GM10248 (cell line): ENCODE measurements at regions of chr3 and their contacts with region 1.

Region 1: GRCh38 chr3:71875461-71875947 is 90.6 kb upstream of the PROK2 start:
- DNase-seq: peak; percentile 75
- CTCF ChIP-seq: peak; percentile 93

Region 2: GRCh38 chr3:71803248-71803647 is 72.3 kb before region 1 on chr3:
- CTCF ChIA-PET with region 1: no interaction called
- POLR2A ChIA-PET with region 1: no interaction called
- DNase-seq: no peak
- CTCF ChIP-seq: no peak

Region 3: DNA sequence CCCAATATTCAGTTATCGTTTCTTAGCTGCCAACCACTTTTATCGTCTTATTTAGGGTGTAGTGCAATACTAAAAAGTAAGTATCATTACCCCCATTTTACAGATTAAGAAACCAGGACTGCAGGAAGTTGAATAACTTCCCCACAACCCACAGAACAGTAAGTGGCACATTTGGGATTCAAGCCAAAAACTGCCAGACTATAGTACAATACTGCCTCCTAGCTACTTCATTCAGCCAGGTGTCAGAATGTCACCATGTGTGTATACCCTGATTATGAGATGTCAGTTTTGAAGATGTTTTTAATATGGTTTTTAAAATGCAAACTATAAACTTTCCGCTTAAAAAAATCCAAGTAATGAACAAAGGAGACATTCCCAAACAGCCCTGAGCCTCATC is 16.4 kb before region 1 on chr3:
- CTCF ChIA-PET with region 1: interaction called, 25 read pairs
- POLR2A ChIA-PET with region 1: no interaction called
- DNase-seq: no peak
- CTCF ChIP-seq: peak; percentile 28

Region 4: GRCh38 chr3:71890356-71891215 is 15.1 kb after region 1 on chr3:
- CTCF ChIA-PET with region 1: interaction called, 28 read pairs
- POLR2A ChIA-PET with region 1: no interaction called
- DNase-seq: no peak
- CTCF ChIP-seq: no peak

Region 5: GRCh38 chr3:71896751-71897150 is 21.2 kb after region 1 on chr3:
- CTCF ChIA-PET with region 1: interaction called, 11 read pairs
- POLR2A ChIA-PET with region 1: no interaction called
- DNase-seq: no peak
- CTCF ChIP-seq: no peak

Region 6: DNA sequence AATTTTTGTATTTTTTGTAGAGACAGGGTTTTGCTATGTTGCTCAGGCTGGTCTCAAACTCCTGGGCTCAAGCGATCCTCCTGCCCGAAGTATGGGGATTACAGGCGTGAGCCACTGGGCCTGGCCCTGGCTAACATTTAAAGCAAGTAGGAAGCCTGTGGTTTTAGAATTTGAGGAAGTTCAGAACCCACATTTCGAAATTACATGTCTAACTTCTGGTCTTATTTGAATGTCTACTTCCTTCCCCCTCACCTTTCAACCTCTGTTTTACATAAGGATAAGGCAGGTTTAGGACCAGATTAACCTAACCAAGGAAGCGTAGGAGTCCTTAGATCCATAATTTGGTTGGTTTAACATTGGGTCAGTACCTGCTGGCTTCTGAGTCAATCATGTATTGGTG is 29.9 kb after region 1 on chr3:
- CTCF ChIA-PET with region 1: interaction called, 12 read pairs
- POLR2A ChIA-PET with region 1: no interaction called
- DNase-seq: peak; percentile 50
- CTCF ChIP-seq: no peak

Region 7: GRCh38 chr3:71926262-71926600 is 50.7 kb after region 1 on chr3:
- CTCF ChIA-PET with region 1: interaction called, 18 read pairs
- POLR2A ChIA-PET with region 1: no interaction called
- DNase-seq: peak; percentile 35
- CTCF ChIP-seq: peak; percentile 29

Region 8: GRCh38 chr3:72152551-72153476 is 277.3 kb after region 1 on chr3:
- CTCF ChIA-PET with region 1: no interaction called
- POLR2A ChIA-PET with region 1: no interaction called
- DNase-seq: no peak
- CTCF ChIP-seq: no peak